Activated T-helper 2 cell treated with anti-CD3 and anti-CD28 coated beads, Interferon-gamma antibody, Interleukin-2, Interleukin-4, amounts not matched to agents 10 μg/mL and 5 μg/mL and 100 μg/mL, durations not matched to agents 14 hours and 24 hours and 36 hours (primary cell): ENCODE measurements at regions of chr1 and their contacts with region 1.

Region 1: GRCh38 chr1:32200226-32201010 is at the start of gene CCDC28B:
- DNase-seq: peak; percentile 49
- H3K4me3 Mint-ChIP-seq: peak within 1 kb of the TSS; percentile 80
- H3K27ac Mint-ChIP-seq: peak within 1 kb of the TSS; percentile 93
- H3K4me1 Mint-ChIP-seq: peaks cover 57% of the 10 kb centered on the region
- H3K27me3 Mint-ChIP-seq: no peaks in the 10 kb centered on the region
- total RNA-seq, gene CCDC28B: 39.1 and 44.0 TPM in 2 replicates

Region 2: GRCh38 chr1:32179443-32180185 is 20.8 kb before region 1 on chr1 and contains the start of gene TXLNA:
- intact Hi-C with region 1: loop called (anchors 1 kb)
- DNase-seq: peak; percentile 87
- H3K4me3 Mint-ChIP-seq: peak within 1 kb of the TSS; percentile 97
- H3K27ac Mint-ChIP-seq: peak within 1 kb of the TSS; percentile 98
- H3K4me1 Mint-ChIP-seq: peaks cover 34% of the 10 kb centered on the region
- H3K27me3 Mint-ChIP-seq: no peaks in the 10 kb centered on the region
- total RNA-seq, gene TXLNA: 98.6 and 101 TPM in 2 replicates

Region 3: DNA sequence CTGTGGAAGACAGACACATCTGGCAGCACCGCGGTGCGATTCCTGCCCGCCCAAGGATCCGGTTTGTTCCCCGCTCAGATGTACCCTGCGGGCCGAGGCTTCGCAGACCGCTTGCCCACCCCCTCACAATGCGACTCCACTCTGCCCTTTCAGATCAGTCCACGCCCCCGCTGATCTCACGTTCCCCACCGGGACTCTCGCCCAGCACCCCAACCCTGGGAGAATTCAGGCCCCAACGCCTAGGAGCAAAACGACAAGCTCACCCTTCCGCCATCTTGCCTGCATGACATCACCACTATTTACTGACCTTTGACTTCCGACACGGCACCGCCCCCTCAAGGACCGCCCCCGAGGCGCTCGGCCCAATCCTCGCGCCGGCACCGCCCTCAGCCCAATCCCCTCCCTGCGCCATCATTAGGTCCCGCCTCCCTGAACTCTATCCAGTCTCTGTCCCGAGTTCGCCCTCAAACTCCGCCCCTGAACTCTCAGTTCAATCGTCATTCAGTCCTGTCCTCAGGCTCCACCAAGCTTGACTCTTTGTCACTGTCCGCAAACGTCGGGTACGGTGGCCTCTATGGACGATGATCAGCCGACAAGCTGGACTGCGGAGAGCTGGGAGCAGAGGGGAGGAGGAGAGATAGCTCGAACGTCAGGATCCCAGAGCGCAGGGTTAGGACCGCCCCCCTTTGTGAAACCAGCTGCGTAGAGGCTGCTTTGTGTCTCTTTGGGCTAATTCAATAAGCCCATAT is 193.9 kb after region 1 on chr1 and contains the start of gene BSDC1:
- intact Hi-C with region 1: loop called (anchors 5 kb)
- DNase-seq: peak; percentile 98
- H3K4me3 Mint-ChIP-seq: peak within 1 kb of the TSS; percentile 99
- H3K27ac Mint-ChIP-seq: peak within 1 kb of the TSS; percentile 99
- H3K4me1 Mint-ChIP-seq: peaks cover 12% of the 10 kb centered on the region
- H3K27me3 Mint-ChIP-seq: peaks cover 10% of the 10 kb centered on the region
- total RNA-seq, gene BSDC1: 48.9 and 54.3 TPM in 2 replicates

Region 4: DNA sequence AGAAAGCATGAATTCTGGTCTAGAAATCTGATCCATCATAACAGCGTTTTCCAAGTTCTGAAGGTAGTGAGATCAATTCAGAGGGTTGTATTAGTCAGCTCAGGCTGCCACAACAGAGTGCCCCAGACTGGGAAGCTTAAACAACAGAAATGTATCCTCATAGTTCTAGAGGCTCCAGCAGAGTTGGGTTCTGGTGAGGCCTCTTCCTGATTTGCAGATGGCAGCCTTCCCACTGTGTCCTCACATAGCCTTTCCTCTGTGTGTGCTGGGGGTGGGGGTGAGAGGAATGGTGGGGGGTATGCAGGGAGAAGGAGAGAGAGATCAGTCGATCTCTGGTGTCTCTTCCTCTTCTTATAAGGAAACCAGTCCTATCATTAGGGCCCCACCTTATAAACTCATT is 279.6 kb after region 1 on chr1:
- intact Hi-C with region 1: no loop called
- DNase-seq: no peak
- H3K4me3 Mint-ChIP-seq: no peak overlapping the region
- H3K27ac Mint-ChIP-seq: no peak overlapping the region
- H3K4me1 Mint-ChIP-seq: no peaks in the 10 kb centered on the region
- H3K27me3 Mint-ChIP-seq: peaks cover 7% of the 10 kb centered on the region